Mammary epithelial cell (primary cell): ENCODE measurements at regions of chr6 and their contacts with region 1.

Region 1: DNA sequence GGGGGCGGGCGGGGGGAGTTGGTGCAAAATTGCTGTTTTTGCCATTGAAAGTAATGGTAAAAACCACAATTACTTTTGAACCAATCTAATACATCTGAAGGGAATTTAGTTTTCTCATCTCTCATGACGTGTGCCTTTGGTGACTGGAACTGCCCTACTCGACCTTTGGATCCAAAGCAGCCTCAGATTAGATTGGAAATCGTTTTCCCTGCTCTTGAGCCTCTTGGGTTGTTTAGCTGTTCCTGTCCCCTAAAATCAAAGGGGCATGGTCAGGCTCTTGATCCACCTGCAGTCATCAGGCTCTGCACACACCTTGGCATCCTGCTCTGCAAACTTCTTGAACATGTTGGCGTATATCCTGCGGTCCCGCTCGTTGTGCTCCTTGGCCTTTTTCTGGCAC is 64.0 kb upstream of the TULP1 start:
- DNase-seq: no peak
- H3K4me3 ChIP-seq: no peak overlapping the region
- H3K27ac ChIP-seq: no peak overlapping the region
- H3K4me1 ChIP-seq: no peaks in the 10 kb centered on the region
- H3K27me3 ChIP-seq: no peaks in the 10 kb centered on the region
- CTCF ChIP-seq: no peak

Region 2: GRCh38 chr6:35445696-35446095 is 131.0 kb before region 1 on chr6:
- CTCF ChIA-PET with region 1: no interaction called
- dilution Hi-C with region 1: no loop called
- in situ Hi-C with region 1: no loop called
- intact Hi-C with region 1: no loop called
- DNase-seq: no peak
- H3K4me3 ChIP-seq: no peak overlapping the region
- H3K27ac ChIP-seq: no peak overlapping the region
- H3K4me1 ChIP-seq: peaks cover 9% of the 10 kb centered on the region
- H3K27me3 ChIP-seq: no peaks in the 10 kb centered on the region
- CTCF ChIP-seq: no peak

Region 3: DNA sequence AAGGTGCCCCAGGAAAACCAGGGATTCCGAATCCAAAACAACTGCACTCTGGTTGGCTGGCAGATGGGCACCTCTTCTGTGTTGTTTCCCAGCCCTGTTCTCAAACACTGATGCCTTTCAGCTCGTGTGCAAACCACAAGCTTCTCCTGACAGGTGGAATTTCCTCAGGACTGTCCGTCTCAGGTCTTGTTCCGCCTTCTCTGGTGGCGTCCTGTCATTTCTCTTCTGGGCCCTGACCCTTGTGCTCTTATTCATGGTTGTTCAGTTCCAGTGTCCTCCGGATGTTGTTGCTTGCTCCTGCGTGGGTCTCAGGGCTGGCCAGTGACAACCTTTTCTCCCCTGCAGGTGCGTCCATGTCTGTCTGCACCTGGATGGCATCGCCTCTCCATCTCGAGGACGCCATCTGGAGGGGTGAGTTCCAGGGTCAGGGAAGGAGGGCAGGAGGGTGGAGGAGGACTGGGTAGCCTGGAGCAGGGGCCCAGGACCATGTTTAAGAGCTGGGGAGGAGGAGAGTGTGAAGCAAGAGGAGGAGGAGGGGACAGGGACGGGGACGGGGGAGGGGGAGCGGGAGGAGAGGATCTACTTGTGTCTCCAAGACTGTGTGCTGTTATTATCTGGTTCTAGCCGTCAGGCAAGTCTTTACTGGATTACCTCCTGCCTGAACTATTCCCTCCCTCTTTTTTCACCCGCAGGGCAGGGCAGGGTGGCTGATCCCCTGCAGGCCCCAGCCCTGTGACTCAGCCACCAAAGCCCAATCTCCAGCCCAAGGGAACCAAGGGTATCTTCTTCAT is 32.0 kb before region 1 on chr6:
- CTCF ChIA-PET with region 1: no interaction called
- dilution Hi-C with region 1: loop called (anchors 5 kb)
- in situ Hi-C with region 1: no loop called
- intact Hi-C with region 1: no loop called
- DNase-seq: peak; percentile 58
- H3K4me3 ChIP-seq: no peak overlapping the region
- H3K27ac ChIP-seq: no peak overlapping the region
- H3K4me1 ChIP-seq: no peaks in the 10 kb centered on the region
- H3K27me3 ChIP-seq: no peaks in the 10 kb centered on the region
- CTCF ChIP-seq: no peak